ENCODE measurements at regions of chr22 and their contacts with region 1.

Region 1: GRCh38 chr22:17368554-17369438 is 464 bp upstream of the CECR2 start:
- DNase-seq: peak; percentile 41 to 67 (median 54)
- H3K4me3 ChIP-seq: peak overlapping the region; percentile 34 to 84 (median 68)
- H3K27ac ChIP-seq: peak overlapping the region; percentile 13 to 95 (median 89)
- H3K27me3 ChIP-seq: peaks cover 0 to 66% (median 18%) of the 10 kb centered on the region in 45 donors
- CTCF ChIP-seq: peak in 5 of 56 donors; percentile 5 to 19 (median 7)

Region 2: DNA sequence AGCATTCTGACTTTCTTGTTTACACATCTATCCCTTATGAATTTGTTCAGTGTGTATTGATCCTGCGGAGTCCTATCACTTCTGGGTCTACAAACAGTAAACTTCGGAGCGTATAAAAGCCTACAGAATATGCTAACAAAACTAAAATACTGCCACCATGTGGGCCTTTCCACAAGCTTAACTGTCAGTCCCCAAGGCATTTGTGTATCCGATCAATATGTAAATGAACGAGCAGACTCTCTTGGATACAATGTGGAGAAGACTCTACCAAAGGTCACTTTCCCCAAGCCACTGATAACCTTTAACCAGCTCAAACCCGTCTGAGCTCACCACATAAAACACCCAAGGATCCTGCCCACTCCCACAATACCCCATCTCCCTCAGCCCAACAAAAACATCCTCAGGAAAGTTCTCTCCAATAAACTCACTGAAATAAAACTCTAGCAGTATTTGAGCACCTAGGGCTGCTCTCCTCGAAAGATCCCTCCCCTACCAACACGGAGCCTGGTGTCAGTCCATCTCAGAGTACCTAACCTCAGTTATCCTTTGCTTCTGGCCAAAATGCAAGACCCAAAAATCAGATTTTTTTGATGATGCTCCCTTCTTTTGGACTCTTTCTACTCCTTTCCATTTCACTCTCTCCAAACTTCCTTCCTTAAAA is 167.4 kb before region 1 on chr22:
- intact Hi-C with region 1: loop called in 1 of 2 experiments (anchors 10 kb)
- DNase-seq: no peak
- H3K4me3 ChIP-seq: no peak overlapping the region
- H3K27ac ChIP-seq: no peak overlapping the region
- H3K27me3 ChIP-seq: peaks cover 0 to 10% (median 0%) of the 10 kb centered on the region in 45 donors
- CTCF ChIP-seq: peak in 41 of 56 donors; percentile 5 to 55 (median 34)

Region 3: GRCh38 chr22:17300926-17301325 is 67.9 kb before region 1 on chr22:
- intact Hi-C with region 1: no loop called
- DNase-seq: no peak
- H3K4me3 ChIP-seq: no peak overlapping the region
- H3K27ac ChIP-seq: no peak overlapping the region
- H3K27me3 ChIP-seq: peaks cover 0 to 7% (median 0%) of the 10 kb centered on the region in 45 donors
- CTCF ChIP-seq: no peak